Activated CD4-positive, alpha-beta memory T cell treated with anti-CD3 and anti-CD28 coated beads for 36 hours (primary cell): ENCODE measurements at regions of chr16 and their contacts with region 1.

Region 1: DNA sequence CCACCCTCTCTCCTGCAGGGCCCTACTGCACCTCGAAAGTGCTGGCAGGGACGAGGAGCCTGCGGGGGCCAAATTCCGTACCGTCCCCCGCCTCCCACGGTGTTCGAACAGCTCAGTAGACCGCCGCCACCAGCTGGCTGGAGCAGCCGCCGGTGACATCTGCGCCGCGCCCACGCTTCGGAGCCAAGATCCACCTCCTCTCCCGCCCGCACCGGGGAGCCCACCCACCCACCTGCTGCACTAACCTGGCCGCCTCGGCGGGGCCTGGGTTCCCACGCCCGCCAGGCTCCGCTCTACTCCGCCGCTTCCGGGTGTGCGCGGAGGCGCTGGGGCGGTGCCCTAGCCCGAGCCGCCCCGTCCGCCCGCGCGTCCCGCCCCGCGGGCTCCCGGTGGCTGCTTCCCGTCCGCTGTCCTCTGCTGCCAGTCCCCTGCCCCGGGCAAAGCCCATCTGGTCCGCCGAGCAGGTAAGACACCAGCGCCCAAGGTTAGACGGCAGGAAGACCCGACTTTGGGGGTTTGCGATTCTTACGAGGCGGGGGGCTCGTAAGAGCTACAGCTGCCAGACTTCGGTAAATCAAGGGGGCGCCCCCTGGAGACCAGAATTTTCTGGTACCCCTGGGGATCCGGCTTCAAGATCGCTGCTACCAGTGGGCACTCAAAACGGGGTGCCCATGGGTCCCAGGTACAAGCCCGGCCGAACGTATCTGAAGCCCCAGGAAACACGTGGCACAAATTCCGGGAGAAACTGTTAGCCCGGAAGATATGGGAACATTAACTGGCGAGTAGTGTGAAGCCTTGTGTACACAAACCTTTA is at the starts of genes FBXL8 and TRADD:
- DNase-seq: peak; percentile 86
- H3K4me3 Mint-ChIP-seq: peak within 1 kb of the TSS; percentile 93
- H3K27ac Mint-ChIP-seq: peak within 1 kb of the TSS; percentile 95
- H3K4me1 Mint-ChIP-seq: peaks cover 57% of the 10 kb centered on the region
- H3K27me3 Mint-ChIP-seq: peaks cover 13% of the 10 kb centered on the region
- total RNA-seq, gene FBXL8: 24.1 to 25.7 TPM
- total RNA-seq, gene TRADD: 41.7 to 43.2 TPM

Region 2: DNA sequence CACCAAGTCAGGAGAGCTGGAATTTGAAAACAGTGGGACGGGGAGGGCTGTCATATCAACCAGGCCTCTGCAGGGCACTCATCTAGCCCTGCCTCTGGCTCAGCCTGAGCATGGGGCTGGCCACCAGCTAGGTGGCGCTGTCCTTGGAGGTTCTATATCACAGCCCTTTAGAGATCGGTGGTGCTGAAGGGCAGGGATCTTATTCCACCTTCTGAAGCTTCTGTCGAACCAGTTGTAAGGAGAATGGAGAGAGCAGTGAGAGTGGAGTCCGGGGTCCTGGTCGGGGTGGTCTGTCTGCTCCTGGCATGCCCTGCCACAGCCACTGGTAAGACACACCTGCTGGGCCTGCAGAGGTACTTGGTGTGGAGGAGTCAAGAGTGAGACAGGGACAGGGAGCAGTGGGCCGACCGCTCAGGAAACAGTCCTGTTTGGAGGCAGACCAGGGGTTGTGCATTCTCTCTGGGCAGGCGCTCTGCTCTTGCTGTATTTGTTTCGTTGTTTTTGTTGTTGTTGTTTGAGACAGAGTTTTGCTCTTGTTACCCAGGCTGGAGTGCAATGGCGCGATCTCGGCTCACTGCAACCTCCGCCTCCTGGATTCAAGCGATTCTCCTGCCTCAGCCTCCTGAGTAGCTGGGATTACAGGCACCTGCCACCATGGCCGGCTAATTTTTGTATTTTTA is 198.6 kb before region 1 on chr16 and contains the start of gene CES3:
- CTCF ChIA-PET with region 1: interaction called, 50 read pairs
- POLR2A ChIA-PET with region 1: no interaction called
- intact Hi-C with region 1: no loop called
- DNase-seq: peak; percentile 83
- H3K4me3 Mint-ChIP-seq: peak within 1 kb of the TSS; percentile 42
- H3K27ac Mint-ChIP-seq: no peak within 1 kb of the TSS
- H3K4me1 Mint-ChIP-seq: peaks cover 18% of the 10 kb centered on the region
- H3K27me3 Mint-ChIP-seq: no peaks in the 10 kb centered on the region
- total RNA-seq, gene CES3: 1.6 to 3.0 TPM

Region 3: DNA sequence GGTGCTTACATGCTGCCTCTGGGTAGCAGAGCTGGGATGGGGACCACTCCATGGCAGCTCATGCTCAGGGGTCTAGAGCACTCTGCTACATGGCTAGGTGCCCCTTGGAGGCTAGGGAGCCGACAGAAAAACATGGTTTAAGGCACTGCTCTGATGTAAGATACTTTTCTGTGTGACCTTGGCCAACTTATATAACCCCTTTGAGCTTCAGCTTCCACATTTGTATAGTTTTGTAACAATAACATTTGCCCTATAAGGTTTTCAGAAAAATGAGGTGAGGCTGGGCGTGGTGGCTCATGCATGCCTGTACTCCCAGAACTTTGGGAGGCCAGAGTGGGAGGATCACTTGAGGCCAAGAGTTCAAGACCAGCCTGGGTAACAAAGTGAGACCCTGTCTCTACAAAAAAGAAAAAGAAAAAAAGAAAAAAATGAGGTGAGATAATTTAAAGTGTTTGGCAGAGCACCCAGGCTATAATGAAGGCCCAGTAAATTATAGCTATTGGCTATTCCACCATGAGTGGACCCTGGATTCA is 168.2 kb before region 1 on chr16:
- CTCF ChIA-PET with region 1: interaction called, 15 read pairs
- POLR2A ChIA-PET with region 1: no interaction called
- intact Hi-C with region 1: no loop called
- DNase-seq: no peak
- H3K4me3 Mint-ChIP-seq: no peak overlapping the region
- H3K27ac Mint-ChIP-seq: no peak overlapping the region
- H3K4me1 Mint-ChIP-seq: peaks cover 14% of the 10 kb centered on the region
- H3K27me3 Mint-ChIP-seq: no peaks in the 10 kb centered on the region

Region 4: DNA sequence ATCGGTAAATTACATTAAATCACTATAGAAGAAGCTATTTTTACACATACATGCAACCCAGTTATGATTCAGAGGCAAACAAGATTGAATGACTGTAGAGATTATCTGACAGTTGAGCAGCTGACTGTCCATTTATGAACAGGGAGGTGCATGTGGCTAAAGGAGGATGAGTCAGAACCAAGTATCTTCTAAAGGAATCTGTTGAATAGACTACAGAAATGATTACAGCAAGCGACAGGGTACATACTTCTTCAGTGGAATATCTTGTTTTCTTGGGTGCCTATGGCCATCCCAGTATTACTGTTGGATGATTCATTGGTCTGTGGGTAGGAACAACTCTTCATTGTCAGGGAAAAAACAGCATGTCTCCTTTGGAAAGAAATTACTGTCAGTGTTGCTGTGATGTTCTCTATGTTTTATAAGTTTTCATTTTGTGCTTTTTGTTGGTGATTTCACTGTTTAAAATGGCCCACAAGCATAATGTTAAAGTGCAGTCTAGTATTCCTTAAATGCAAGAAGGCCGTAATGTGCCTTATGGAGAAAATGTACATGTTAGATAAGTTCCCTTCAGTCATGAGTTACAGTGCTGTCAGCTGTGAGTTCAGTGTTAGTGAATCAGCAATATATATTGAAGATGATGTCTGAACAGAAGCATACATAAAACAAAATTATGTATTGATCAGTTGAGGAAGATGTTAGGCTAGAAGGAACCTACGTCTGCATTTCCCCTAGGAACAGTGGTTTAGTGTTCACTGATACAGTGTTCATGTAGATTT is 103.9 kb before region 1 on chr16:
- CTCF ChIA-PET with region 1: interaction called, 10 read pairs
- POLR2A ChIA-PET with region 1: interaction called, 5 read pairs
- intact Hi-C with region 1: no loop called
- DNase-seq: peak; percentile 36
- H3K4me3 Mint-ChIP-seq: peak overlapping the region; percentile 54
- H3K27ac Mint-ChIP-seq: peak overlapping the region; percentile 77
- H3K4me1 Mint-ChIP-seq: peaks cover 48% of the 10 kb centered on the region
- H3K27me3 Mint-ChIP-seq: no peaks in the 10 kb centered on the region

Region 5: DNA sequence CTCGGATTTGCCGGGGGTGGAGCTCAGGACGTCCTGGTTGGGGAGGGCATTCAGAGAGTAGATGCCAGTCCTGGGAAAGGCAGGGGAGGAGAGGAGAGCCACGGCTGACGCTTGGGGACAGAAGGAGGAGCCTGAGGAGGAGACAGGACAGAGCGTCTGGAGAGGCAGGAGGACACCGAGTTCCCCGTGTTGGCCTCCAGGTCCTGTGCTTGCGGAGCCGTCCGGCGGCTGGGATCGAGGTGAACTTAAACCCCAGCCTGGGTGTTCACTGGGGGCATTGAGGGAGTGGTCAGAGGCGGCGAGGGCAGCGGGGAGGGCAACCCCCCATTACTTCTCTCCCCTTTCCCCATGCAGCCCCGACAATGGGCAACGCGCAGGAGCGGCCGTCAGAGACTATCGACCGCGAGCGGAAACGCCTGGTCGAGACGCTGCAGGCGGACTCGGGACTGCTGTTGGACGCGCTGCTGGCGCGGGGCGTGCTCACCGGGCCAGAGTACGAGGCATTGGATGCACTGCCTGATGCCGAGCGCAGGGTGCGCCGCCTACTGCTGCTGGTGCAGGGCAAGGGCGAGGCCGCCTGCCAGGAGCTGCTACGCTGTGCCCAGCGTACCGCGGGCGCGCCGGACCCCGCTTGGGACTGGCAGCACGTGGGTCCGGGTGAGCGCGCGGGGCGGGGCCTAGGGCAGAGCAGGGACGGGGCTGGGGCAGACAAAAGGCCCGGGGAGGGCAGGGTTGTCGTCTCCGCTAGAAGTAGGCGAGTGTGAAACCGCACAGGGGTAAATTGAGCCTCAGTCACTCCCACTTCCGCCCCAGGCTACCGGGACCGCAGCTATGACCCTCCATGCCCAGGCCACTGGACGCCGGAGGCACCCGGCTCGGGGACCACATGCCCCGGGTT is 14.3 kb after region 1 on chr16:
- CTCF ChIA-PET with region 1: interaction called, 39 read pairs
- POLR2A ChIA-PET with region 1: interaction called, 23 read pairs
- intact Hi-C with region 1: loop called (anchors 1 kb)
- DNase-seq: peak; percentile 79
- H3K4me3 Mint-ChIP-seq: peak overlapping the region; percentile 64
- H3K27ac Mint-ChIP-seq: no peak overlapping the region
- H3K4me1 Mint-ChIP-seq: peaks cover 42% of the 10 kb centered on the region
- H3K27me3 Mint-ChIP-seq: peaks cover 25% of the 10 kb centered on the region